ENCODE measurements at regions of chr4 and their contacts with region 1.

Region 1: DNA sequence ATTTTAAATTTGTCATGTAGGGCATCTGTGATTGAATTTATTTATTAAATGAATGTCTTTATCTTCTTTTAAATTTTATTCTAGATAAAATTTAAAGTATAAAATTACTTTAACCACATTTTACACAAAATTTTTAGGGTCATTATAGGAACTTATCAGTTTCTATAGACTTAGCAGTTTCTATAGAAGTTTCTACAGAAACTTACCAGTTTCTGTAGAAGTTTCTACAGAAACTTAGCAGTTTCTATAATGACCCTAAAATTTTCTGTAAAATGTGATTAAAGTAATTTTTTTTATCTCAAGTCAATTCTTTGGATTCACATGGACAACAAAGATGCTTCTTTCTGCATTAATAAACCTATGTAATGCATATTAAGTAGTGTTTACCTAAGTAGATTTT is 565.9 kb upstream of the TECRL start:
- DNase-seq: no peak
- ATAC-seq: no peak
- H3K4me3 ChIP-seq: no peak overlapping the region
- H3K27ac ChIP-seq: no peak overlapping the region
- H3K4me1 ChIP-seq: no peaks in the 10 kb centered on the region
- H3K27me3 ChIP-seq: no peaks in the 10 kb centered on the region
- CTCF ChIP-seq: no peak

Region 2: DNA sequence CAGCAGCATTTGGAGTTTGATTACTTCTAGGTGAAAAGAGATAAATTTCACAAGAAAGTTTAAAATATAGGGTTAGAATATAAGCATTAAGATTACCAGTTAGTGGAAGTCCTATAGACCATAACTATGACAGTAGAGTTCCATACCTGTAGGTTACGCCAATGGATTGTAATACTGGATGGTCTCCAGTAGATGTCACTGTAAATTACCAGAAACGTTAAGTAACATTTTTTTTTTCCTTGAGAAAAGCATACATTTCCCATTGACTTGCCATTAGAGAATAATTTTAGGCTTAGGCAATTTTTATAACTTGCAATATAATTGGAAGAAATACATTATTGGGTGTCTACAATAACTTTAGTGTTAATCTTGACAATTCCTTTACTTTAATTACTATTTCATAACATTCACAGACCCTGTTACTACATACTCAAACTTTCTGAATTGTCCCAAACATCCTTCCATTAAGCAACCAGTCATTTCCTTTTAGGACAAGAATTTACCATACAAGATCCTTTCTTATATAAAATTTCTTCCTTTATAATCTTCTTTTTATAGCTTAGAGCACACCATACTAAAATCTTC is 261.8 kb before region 1 on chr4:
- intact Hi-C with region 1: no loop called
- DNase-seq: peak in 1 of 4 donors; percentile 8
- ATAC-seq: peak; percentile 52
- H3K4me3 ChIP-seq: no peak overlapping the region
- H3K27ac ChIP-seq: no peak overlapping the region
- H3K4me1 ChIP-seq: no peaks in the 10 kb centered on the region
- H3K27me3 ChIP-seq: no peaks in the 10 kb centered on the region
- CTCF ChIP-seq: peak; percentile 31 to 41

Region 3: DNA sequence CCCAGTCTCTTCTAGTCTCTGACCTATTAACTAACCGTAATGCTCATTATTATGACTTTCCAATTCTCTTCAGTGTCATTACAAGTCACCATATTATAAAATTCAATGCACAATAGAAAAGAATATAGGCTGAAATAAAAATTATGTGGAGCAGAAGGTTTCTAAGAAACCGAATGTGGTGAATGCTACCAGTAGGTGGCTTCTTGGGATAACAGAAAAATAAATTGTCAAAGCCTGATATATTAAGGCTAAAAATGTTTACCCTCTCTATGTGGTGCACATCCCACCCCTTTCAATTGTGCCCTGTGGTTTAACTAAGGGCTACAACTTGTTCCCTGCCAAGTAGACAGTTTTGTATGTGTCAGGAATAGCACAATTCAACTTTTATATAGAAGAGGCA is 58.7 kb after region 1 on chr4:
- intact Hi-C with region 1: loop called in 1 of 2 experiments (anchors 5 kb)
- DNase-seq: no peak
- ATAC-seq: no peak
- H3K4me3 ChIP-seq: no peak overlapping the region
- H3K27ac ChIP-seq: no peak overlapping the region
- H3K4me1 ChIP-seq: no peaks in the 10 kb centered on the region
- H3K27me3 ChIP-seq: no peaks in the 10 kb centered on the region
- CTCF ChIP-seq: no peak